CD8-positive, alpha-beta T cell (primary cell): ENCODE measurements at regions of chr2 and their contacts with region 1.

Region 1: DNA sequence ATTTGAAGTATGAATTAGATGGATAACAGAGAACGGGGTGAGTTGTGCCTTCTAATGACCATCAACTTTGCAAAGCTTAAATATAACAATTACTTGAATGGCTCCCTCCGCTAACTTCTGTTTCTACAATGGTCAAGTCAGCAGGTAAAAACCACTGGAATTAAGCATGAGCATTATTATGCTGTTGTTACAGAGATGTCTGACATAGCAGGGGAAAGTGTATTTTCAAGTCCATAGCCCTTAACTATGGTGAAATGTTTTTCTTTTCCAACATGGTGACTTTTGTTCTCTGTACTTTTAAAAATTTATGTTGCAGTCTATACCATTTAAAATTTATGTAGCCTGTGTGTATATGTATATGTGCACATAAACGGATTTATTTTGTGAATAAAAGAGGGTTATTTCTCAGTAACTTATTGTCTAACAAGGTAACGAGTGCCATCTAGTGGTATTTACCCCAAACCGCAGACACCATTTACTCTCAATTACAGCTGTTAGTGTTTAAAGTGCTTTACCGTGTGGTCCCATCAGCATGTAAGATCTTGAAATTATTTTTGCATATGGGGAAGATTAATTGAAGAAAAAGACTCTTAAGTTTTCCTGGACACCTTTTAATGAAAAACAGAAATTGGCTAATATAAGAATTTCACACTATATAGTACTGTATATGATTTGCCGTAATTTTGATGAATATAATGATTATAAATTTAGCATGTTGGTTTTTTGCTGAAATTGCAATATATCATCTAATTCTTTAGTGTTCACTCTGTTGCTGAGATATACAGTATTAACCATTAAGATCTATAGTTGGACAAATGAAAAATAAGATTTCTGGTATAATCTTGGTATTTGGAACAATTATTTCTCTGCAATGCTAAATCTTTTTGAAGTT is 78.2 kb downstream of the UBE2E3 start:
- DNase-seq: peak in 8 of 9 experiments; percentile 2 to 69 (median 32)
- ATAC-seq: peak; percentile 57
- H3K4me3 ChIP-seq: no peak overlapping the region
- H3K4me3 Mint-ChIP-seq: no peak overlapping the region
- H3K27ac ChIP-seq: no peak overlapping the region
- H3K27ac Mint-ChIP-seq: no peak overlapping the region
- H3K4me1 ChIP-seq: no peaks in the 10 kb centered on the region
- H3K4me1 Mint-ChIP-seq: peaks cover 4% of the 10 kb centered on the region
- H3K27me3 ChIP-seq: no peaks in the 10 kb centered on the region
- H3K27me3 Mint-ChIP-seq: no peaks in the 10 kb centered on the region
- CTCF ChIP-seq: peak; percentile 95

Region 2: DNA sequence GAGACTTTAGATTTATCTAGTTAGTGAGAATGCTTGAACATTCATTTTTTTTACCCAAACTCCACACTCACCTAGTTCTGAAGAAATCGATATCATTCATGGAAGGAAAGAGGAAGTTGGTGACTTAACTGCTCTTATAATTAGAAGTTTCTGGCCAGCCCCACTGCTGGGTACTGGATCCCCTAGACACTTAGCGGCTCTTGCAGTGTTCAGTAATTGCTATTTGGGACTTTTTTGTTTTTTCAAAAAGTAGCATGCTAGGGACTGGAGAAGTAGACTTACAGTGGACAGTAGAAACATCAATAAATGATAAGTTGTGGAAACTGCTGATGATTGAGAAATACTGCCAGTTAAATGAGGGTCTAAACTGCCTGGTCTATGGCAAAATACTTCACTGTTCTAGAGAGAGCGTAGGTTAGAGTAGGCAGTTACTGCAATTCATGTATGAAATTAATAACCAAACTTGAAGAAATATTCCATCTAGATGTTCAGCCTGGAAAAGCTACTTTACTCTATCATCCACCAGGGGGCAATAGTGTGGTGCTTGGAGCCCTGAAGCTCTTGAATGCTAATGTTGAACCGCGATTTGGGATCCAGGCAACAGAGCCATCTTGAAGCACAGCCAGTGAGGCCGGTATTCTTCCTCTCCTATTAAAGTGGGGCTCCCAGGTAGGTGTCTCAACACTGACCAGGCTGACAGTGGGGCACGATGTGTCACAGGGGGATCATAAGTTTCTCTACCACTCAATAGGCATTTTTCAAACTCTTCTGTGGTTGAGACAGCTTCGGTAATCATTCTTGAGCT is 1647.9 kb before region 1 on chr2:
- CTCF ChIA-PET with region 1: no interaction called
- POLR2A ChIA-PET with region 1: no interaction called
- intact Hi-C with region 1: loop called in 1 of 2 experiments (anchors 10 kb)
- DNase-seq: peak in 2 of 9 experiments; percentile 14 to 43
- ATAC-seq: no peak
- H3K4me3 ChIP-seq: no peak overlapping the region
- H3K4me3 Mint-ChIP-seq: no peak overlapping the region
- H3K27ac ChIP-seq: no peak overlapping the region
- H3K27ac Mint-ChIP-seq: no peak overlapping the region
- H3K4me1 ChIP-seq: no peaks in the 10 kb centered on the region
- H3K4me1 Mint-ChIP-seq: no peaks in the 10 kb centered on the region
- H3K27me3 ChIP-seq: peaks cover 0 to 4% of the 10 kb centered on the region in 2 experiments
- H3K27me3 Mint-ChIP-seq: peaks cover 19% of the 10 kb centered on the region
- CTCF ChIP-seq: no peak

Region 3: GRCh38 chr2:180125245-180125962 is 933.2 kb before region 1 on chr2:
- CTCF ChIA-PET with region 1: interaction called, 62 read pairs
- POLR2A ChIA-PET with region 1: no interaction called
- intact Hi-C with region 1: loop called (anchors 1 kb)
- DNase-seq: peak; percentile 3 to 72 (median 35)
- ATAC-seq: peak; percentile 75
- H3K4me3 ChIP-seq: no peak overlapping the region
- H3K4me3 Mint-ChIP-seq: no peak overlapping the region
- H3K27ac ChIP-seq: no peak overlapping the region
- H3K27ac Mint-ChIP-seq: no peak overlapping the region
- H3K4me1 ChIP-seq: no peaks in the 10 kb centered on the region
- H3K4me1 Mint-ChIP-seq: peaks cover 2% of the 10 kb centered on the region
- H3K27me3 ChIP-seq: no peaks in the 10 kb centered on the region
- H3K27me3 Mint-ChIP-seq: peaks cover 11% of the 10 kb centered on the region
- CTCF ChIP-seq: no peak

Region 4: DNA sequence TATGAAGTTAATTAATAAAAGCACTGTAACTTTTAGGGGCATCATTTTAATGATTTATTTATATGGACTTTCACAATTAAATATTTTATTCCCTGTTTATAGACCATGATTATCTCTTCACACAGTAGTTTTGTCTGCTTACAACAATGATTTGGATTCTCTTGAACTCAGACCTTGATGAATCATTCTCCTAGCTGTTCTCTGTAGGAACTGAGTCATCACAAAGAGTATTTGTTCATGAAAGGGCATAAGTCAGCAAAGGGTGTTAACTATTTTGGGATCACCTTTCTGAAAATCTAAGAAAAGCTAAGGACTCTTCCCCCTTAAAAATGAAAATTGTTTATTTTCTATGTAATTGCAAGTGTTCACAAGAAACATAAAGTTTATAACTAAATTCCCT is 539.3 kb before region 1 on chr2:
- CTCF ChIA-PET with region 1: no interaction called
- POLR2A ChIA-PET with region 1: no interaction called
- intact Hi-C with region 1: loop called in 1 of 2 experiments (anchors 10 kb)
- DNase-seq: no peak
- ATAC-seq: no peak
- H3K4me3 ChIP-seq: no peak overlapping the region
- H3K4me3 Mint-ChIP-seq: no peak overlapping the region
- H3K27ac ChIP-seq: no peak overlapping the region
- H3K27ac Mint-ChIP-seq: no peak overlapping the region
- H3K4me1 ChIP-seq: no peaks in the 10 kb centered on the region
- H3K4me1 Mint-ChIP-seq: no peaks in the 10 kb centered on the region
- H3K27me3 ChIP-seq: peaks cover 0 to 4% of the 10 kb centered on the region in 2 experiments
- H3K27me3 Mint-ChIP-seq: no peaks in the 10 kb centered on the region
- CTCF ChIP-seq: no peak

Region 5: DNA sequence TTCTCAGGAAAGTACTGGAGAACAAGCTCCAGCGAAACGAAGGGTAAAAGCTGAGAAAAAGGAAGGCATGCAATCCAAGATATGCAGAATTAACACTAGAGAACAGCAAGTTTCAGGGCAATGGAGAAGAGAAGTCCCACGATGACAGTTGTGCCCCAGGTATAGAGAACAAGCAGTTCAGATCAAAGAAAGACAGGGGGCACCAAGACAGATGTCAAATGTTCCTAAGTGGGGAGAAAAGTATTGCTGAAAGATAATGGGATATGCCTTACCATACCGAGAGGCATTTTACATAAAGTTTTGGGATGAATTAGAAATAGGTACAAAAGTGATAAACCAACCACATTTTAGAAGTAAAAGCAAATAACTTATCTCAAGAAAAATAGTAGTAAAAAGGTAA is 157.3 kb before region 1 on chr2:
- CTCF ChIA-PET with region 1: interaction called, 5 read pairs
- POLR2A ChIA-PET with region 1: no interaction called
- intact Hi-C with region 1: loop called in 1 of 2 experiments (anchors 5 kb)
- DNase-seq: peak in 1 of 9 experiments; percentile 2
- ATAC-seq: no peak
- H3K4me3 ChIP-seq: no peak overlapping the region
- H3K4me3 Mint-ChIP-seq: no peak overlapping the region
- H3K27ac ChIP-seq: no peak overlapping the region
- H3K27ac Mint-ChIP-seq: no peak overlapping the region
- H3K4me1 ChIP-seq: no peaks in the 10 kb centered on the region
- H3K4me1 Mint-ChIP-seq: no peaks in the 10 kb centered on the region
- H3K27me3 ChIP-seq: no peaks in the 10 kb centered on the region
- H3K27me3 Mint-ChIP-seq: peaks cover 32% of the 10 kb centered on the region
- CTCF ChIP-seq: no peak

Region 6: GRCh38 chr2:181106789-181107627 is 48.4 kb after region 1 on chr2:
- CTCF ChIA-PET with region 1: no interaction called
- POLR2A ChIA-PET with region 1: no interaction called
- intact Hi-C with region 1: no loop called
- DNase-seq: peak in 2 of 9 experiments; percentile 20 to 30
- ATAC-seq: peak; percentile 81
- H3K4me3 ChIP-seq: no peak overlapping the region
- H3K4me3 Mint-ChIP-seq: no peak overlapping the region
- H3K27ac ChIP-seq: peak overlapping the region in 1 of 2 experiments; percentile 40
- H3K27ac Mint-ChIP-seq: peak overlapping the region; percentile 90
- H3K4me1 ChIP-seq: peaks cover 33% of the 10 kb centered on the region
- H3K4me1 Mint-ChIP-seq: peaks cover 50% of the 10 kb centered on the region
- H3K27me3 ChIP-seq: no peaks in the 10 kb centered on the region
- H3K27me3 Mint-ChIP-seq: no peaks in the 10 kb centered on the region
- CTCF ChIP-seq: no peak

Region 7: DNA sequence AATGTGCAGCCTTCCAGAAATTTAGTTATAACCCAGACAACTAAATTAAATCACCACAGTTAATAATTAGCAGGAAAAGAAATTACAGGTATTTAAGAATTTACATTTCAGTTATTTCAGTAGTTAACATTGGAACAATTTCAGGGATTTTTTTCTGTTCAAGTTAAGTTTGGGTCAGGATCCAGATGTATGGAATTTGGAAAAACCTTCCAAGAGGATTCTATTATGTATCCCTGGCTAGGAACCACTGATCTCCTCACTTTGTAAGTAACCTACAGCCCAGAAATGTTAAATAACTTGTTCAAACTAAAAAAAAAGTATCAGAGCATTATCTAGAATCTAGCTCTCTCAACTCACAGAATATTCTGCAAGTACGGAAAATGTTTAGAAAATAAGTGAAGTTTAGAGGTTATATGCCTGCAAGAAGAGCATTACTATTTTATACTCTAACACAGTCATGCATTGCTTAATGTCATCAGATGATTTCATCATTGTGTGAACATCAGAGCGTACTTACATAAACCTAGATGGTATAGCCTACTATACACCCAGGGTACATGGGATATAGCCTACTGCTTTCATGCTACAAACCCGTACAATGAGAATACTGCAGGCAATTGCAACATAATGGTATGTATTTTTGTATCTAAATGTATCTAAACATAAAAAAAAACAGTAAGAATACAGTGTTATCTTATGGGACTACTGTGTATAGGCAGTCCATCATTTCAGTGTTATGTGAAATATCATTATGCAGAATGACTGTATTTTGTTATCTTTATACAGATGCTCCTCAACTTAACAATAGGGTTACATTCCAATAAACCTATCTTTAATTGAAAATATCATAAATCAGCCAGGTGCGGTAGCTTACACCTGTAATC is 1973.5 kb after region 1 on chr2:
- CTCF ChIA-PET with region 1: no interaction called
- POLR2A ChIA-PET with region 1: no interaction called
- intact Hi-C with region 1: loop called in 1 of 2 experiments (anchors 5 kb)
- DNase-seq: no peak
- ATAC-seq: no peak
- H3K4me3 ChIP-seq: no peak overlapping the region
- H3K4me3 Mint-ChIP-seq: no peak overlapping the region
- H3K27ac ChIP-seq: no peak overlapping the region
- H3K27ac Mint-ChIP-seq: no peak overlapping the region
- H3K4me1 ChIP-seq: peaks cover 17% of the 10 kb centered on the region
- H3K4me1 Mint-ChIP-seq: peaks cover 18% of the 10 kb centered on the region
- H3K27me3 ChIP-seq: peaks cover 2 to 6% of the 10 kb centered on the region in 2 experiments
- H3K27me3 Mint-ChIP-seq: peaks cover 52% of the 10 kb centered on the region
- CTCF ChIP-seq: no peak